ENCODE measurements at regions of chr1 and their contacts with region 1.

Region 1: GRCh38 chr1:45803301-45803780 is at the start of gene MAST2:
- DNase-seq: peak; percentile 87 to 91
- ATAC-seq: peak; percentile 96 to 99 (median 98)
- H3K4me3 ChIP-seq: peak within 1 kb of the TSS; percentile 19 to 62 (median 60)
- H3K27ac ChIP-seq: peak within 1 kb of the TSS in 9 of 10 donors; percentile 50 to 90 (median 79)
- H3K4me1 ChIP-seq: peaks cover 3 to 29% (median 20%) of the 10 kb centered on the region in 9 donors
- H3K27me3 ChIP-seq: no peaks in the 10 kb centered on the region
- CTCF ChIP-seq: no peak
- total RNA-seq, gene MAST2: 73.7 to 129 (median 86.6) TPM

Region 2: GRCh38 chr1:45750298-45751038 is 52.9 kb before region 1 on chr1 and contains the start of gene IPP:
- intact Hi-C with region 1: loop called in 4 of 10 experiments (anchors 5 kb)
- DNase-seq: peak; percentile 97 to 99
- ATAC-seq: peak; percentile 99 to 100 (median 100)
- H3K4me3 ChIP-seq: peak within 1 kb of the TSS; percentile 24 to 68 (median 62)
- H3K27ac ChIP-seq: peak within 1 kb of the TSS; percentile 87 to 97 (median 95)
- H3K4me1 ChIP-seq: peaks cover 0 to 20% (median 7%) of the 10 kb centered on the region in 9 donors
- H3K27me3 ChIP-seq: no peaks in the 10 kb centered on the region
- CTCF ChIP-seq: peak in 4 of 9 donors; percentile 38 to 52 (median 49)
- total RNA-seq, gene IPP: 13.4 to 30.0 (median 22.0) TPM

Region 3: DNA sequence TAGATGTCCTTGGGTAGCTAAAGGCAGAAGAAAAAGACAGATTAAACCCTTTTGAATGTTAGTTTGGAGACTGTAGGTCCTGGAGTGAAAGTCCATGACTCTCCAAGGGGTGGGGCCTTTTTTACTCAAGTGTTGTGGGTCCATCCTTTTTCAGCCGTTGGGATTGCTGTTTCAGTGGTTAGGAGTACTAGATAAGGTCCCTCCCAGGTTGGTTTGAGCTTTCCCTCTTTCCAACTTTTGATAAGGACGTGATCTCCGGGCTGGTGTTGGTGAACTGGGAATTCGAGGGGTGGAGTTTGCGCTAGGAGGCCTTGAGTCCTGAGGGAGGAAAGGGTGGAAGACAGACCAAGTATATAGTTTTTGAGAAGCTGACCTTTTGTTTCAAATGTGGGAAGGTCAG is 47.6 kb before region 1 on chr1:
- intact Hi-C with region 1: loop called in 4 of 10 experiments (anchors 5 kb)
- DNase-seq: no peak
- ATAC-seq: no peak
- H3K4me3 ChIP-seq: no peak overlapping the region
- H3K27ac ChIP-seq: no peak overlapping the region
- H3K4me1 ChIP-seq: peaks cover 0 to 11% (median 7%) of the 10 kb centered on the region in 9 donors
- H3K27me3 ChIP-seq: no peaks in the 10 kb centered on the region
- CTCF ChIP-seq: no peak